ENCODE measurements at regions of chr12 and their contacts with region 1.

Region 1: DNA sequence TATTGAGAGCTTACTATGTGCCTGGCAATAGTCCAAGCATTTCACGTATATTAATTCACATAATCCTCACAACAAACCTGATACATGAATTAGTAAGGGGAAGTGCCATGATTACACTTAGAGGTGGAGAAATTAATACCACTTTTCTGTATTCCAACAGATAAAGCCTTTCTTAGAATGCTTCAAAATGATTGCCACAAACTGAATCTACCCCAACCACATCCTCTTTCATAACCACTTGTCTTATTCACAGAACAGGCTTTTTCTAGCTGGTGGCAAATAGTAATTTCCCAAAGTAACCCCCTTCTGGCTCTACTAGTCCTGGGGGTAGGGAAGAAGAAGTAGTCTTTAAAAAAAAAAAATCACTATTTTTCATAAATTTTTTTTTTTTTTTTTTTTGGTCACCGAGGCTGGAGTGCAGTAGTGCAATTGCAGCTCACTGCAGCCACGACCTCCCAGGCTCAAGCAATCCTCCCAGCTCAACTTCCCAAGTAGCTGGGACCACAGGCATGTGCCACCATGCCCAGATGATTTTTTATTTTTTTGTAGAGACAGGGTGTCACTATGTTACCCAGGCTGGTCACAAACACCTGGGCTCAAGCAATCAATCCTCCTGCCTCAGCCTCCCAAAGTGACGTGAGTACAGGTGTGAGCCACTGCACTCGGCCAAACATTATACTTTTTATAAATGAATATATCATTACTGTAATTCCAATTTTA is 59.0 kb upstream of the ARID2 start:
- DNase-seq: peak; percentile 47 to 71 (median 52)
- H3K4me3 ChIP-seq: peak overlapping the region in 1 of 3 experiments; percentile 21
- H3K4me3 Mint-ChIP-seq: peak overlapping the region in 1 of 2 donors; percentile 31
- H3K27ac ChIP-seq: no peak overlapping the region
- H3K27ac Mint-ChIP-seq: peak overlapping the region in 2 of 7 donors; percentile 10 to 34
- H3K4me1 ChIP-seq: peaks cover 27 to 28% of the 10 kb centered on the region in 2 donors
- H3K4me1 Mint-ChIP-seq: peaks cover 26% of the 10 kb centered on the region
- H3K27me3 ChIP-seq: no peaks in the 10 kb centered on the region
- H3K27me3 Mint-ChIP-seq: peaks cover 0 to 3% (median 0%) of the 10 kb centered on the region in 3 donors
- CTCF ChIP-seq: no peak

Region 2: DNA sequence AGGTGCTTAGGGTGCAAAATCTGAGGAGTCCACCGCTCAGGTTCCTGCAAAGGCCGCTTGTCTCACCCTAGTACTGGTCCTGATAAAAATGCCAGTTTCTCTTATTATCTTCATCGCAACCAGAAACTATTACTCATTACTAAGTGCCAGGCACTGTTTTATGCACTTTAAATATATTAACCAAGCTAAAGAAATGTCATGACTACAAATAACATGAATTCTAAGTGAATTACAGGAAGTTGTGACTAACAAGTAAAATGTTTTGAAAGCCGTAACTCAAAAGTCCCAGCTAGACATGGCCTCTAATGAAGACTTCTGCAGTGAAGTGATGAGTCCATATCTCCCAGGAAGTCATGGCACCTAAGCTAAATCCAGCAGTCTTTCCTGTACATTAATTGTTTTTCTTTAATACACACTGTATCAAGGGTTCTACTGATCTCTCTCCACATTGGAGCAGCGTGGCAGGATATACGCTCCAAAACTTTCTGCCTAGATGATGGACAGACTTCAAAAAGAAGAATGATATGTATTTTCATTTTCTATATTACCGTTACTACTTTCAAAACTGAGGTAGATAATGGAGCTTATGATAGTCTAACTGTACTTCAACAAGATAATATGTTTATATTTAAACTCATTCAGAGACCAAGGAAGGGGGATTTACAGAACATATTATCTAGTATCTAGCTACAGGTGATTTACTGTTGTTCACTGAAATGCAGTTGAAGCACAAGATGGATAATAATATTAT is 58.3 kb before region 1 on chr12:
- intact Hi-C with region 1: no loop called
- DNase-seq: peak; percentile 5 to 36 (median 21)
- H3K4me3 ChIP-seq: no peak overlapping the region
- H3K4me3 Mint-ChIP-seq: no peak overlapping the region
- H3K27ac ChIP-seq: no peak overlapping the region
- H3K27ac Mint-ChIP-seq: no peak overlapping the region
- H3K4me1 ChIP-seq: peaks cover 0 to 2% of the 10 kb centered on the region in 2 donors
- H3K4me1 Mint-ChIP-seq: peaks cover 23% of the 10 kb centered on the region
- H3K27me3 ChIP-seq: no peaks in the 10 kb centered on the region
- H3K27me3 Mint-ChIP-seq: peaks cover 0 to 2% (median 2%) of the 10 kb centered on the region in 3 donors
- CTCF ChIP-seq: no peak

Region 3: GRCh38 chr12:45622210-45622937 is 48.1 kb before region 1 on chr12:
- intact Hi-C with region 1: loop called in 1 of 2 experiments (anchors 5 kb)
- DNase-seq: peak; percentile 52 to 76 (median 60)
- H3K4me3 ChIP-seq: peak overlapping the region in 1 of 3 experiments; percentile 48
- H3K4me3 Mint-ChIP-seq: peak overlapping the region in 1 of 2 donors; percentile 70
- H3K27ac ChIP-seq: peak overlapping the region; percentile 57 to 78
- H3K27ac Mint-ChIP-seq: peak overlapping the region; percentile 42 to 91 (median 86)
- H3K4me1 ChIP-seq: peaks cover 24 to 39% of the 10 kb centered on the region in 2 donors
- H3K4me1 Mint-ChIP-seq: peaks cover 28% of the 10 kb centered on the region
- H3K27me3 ChIP-seq: no peaks in the 10 kb centered on the region
- H3K27me3 Mint-ChIP-seq: no peaks in the 10 kb centered on the region
- CTCF ChIP-seq: no peak

Region 4: DNA sequence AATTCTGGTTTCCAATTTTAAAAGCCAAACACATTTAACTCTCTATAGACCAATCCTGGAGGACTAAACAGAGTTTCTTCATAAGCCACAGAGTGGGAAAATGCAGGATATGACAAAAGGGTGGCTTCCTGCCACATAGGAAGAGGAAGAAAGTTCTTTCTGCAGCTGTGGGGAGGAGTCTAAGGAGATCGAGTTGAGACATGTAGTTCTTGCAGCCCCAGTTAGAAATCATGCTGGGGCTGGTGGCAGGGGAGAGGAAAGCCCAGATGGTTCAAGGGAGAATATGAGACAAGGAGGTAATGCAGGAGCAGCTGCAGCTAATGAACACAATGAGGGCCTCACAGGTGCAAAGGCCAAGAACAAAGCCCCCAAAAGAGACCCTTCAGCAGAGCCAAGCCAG is 26.0 kb before region 1 on chr12:
- intact Hi-C with region 1: no loop called
- DNase-seq: peak; percentile 35 to 67 (median 57)
- H3K4me3 ChIP-seq: peak overlapping the region in 2 of 3 experiments; percentile 5 to 58
- H3K4me3 Mint-ChIP-seq: peak overlapping the region; percentile 47 to 82
- H3K27ac ChIP-seq: peak overlapping the region; percentile 15 to 65
- H3K27ac Mint-ChIP-seq: peak overlapping the region; percentile 58 to 86 (median 84)
- H3K4me1 ChIP-seq: peaks cover 17 to 24% of the 10 kb centered on the region in 2 donors
- H3K4me1 Mint-ChIP-seq: peaks cover 25% of the 10 kb centered on the region
- H3K27me3 ChIP-seq: no peaks in the 10 kb centered on the region
- H3K27me3 Mint-ChIP-seq: no peaks in the 10 kb centered on the region
- CTCF ChIP-seq: no peak

Measured in CD14-positive monocyte (primary cell).